ENCODE measurements at regions of chr12 and their contacts with region 1.

Region 1: GRCh38 chr12:132053338-132054330 is 90.5 kb downstream of the DDX51 start:
- DNase-seq: peak; percentile 36

Region 2: GRCh38 chr12:132375747-132376463 is 322.3 kb after region 1 on chr12:
- intact Hi-C with region 1: loop called in 1 of 2 experiments (anchors 5 kb)
- DNase-seq: peak; percentile 67

Measured in posterior vena cava (tissue), 2 donors.